MCF 10A (cell line): ENCODE measurements at regions of chr5 and their contacts with region 1.

Region 1: DNA sequence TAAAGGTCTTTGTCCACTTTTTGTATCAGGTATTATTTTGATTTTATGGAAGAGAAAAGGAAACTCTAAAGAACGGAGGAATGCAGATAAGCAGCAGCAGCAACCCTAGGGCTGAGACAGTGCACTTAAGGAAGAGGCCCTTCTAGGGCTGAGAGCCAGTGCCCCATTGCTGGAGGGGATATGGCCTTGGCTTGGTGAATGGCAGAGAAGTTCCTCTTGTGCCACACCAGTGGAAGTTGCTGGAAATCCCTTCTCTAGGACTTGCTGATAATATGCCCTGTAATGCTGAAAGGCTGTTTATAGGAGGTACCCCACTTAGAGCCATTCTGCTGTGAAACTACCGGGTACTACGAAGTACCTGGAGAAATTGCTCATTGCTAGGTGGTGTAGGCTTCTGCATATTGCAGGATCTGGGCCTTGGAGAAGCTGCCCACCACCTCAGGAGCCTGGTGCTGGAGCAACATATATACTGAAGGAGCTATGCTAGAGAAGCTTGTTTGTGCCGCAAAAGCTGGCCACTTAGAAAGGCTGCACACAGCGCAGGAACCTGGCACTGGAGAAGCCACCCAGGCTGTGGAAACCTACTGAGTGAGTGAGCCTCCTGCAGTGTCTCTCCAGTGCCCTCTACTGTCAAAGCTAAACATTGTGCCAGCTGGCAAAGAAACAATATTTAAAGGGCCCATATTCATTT is 9.6 kb upstream of the UBTD2 start:
- DNase-seq: peak; percentile 87
- H3K4me3 Mint-ChIP-seq: no peak overlapping the region
- H3K27ac Mint-ChIP-seq: no peak overlapping the region
- H3K4me1 Mint-ChIP-seq: peaks cover 9% of the 10 kb centered on the region
- H3K27me3 Mint-ChIP-seq: peaks cover 12% of the 10 kb centered on the region
- CTCF ChIP-seq: peak; percentile 97

Region 2: DNA sequence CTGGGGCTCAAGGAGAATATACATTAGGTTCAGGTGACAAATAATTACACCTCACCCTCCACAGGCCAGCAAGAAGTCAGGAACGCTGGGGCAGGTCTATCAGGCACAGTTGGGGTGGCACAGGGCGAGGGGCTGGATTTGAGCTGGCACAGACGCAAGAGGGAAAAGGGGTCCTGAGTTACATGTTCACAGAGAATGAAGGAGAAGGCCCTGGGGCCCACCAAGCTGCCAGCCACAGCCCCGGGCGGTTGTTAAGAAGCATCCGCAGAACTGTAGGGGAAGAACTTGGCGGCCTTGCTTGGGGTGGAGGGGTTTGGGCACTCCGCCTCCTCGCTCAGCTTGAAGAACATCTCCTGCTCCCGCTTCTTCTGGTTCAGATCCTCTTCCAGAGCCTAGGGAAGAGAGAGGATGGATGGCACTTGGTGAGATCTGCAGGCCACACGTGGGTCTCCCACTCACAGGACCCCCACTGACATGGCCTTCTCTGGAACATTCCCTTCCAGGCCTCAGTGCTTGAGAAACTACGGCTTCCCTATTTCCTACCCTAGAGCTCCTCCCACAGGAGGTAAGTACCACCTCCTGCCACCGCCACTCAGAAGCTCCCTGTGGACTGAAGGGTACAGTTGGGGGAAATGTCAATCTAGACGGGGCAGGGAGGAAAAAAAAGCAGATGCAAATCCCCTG is 248.4 kb before region 1 on chr5:
- CTCF ChIA-PET with region 1: interaction called, 5 read pairs
- POLR2A ChIA-PET with region 1: no interaction called
- intact Hi-C with region 1: loop called (anchors 5 kb)
- DNase-seq: no peak
- H3K4me3 Mint-ChIP-seq: no peak overlapping the region
- H3K27ac Mint-ChIP-seq: peak overlapping the region; percentile 52
- H3K4me1 Mint-ChIP-seq: peaks cover 6% of the 10 kb centered on the region
- H3K27me3 Mint-ChIP-seq: no peaks in the 10 kb centered on the region
- CTCF ChIP-seq: no peak

Region 3: GRCh38 chr5:172106511-172107356 is 186.5 kb before region 1 on chr5:
- CTCF ChIA-PET with region 1: interaction called, 15 read pairs
- POLR2A ChIA-PET with region 1: interaction called, 4 read pairs
- intact Hi-C with region 1: loop called (anchors 1 kb)
- DNase-seq: peak; percentile 47
- H3K4me3 Mint-ChIP-seq: peak overlapping the region; percentile 46
- H3K27ac Mint-ChIP-seq: no peak overlapping the region
- H3K4me1 Mint-ChIP-seq: peaks cover 65% of the 10 kb centered on the region
- H3K27me3 Mint-ChIP-seq: no peaks in the 10 kb centered on the region
- CTCF ChIP-seq: peak; percentile 99

Region 4: DNA sequence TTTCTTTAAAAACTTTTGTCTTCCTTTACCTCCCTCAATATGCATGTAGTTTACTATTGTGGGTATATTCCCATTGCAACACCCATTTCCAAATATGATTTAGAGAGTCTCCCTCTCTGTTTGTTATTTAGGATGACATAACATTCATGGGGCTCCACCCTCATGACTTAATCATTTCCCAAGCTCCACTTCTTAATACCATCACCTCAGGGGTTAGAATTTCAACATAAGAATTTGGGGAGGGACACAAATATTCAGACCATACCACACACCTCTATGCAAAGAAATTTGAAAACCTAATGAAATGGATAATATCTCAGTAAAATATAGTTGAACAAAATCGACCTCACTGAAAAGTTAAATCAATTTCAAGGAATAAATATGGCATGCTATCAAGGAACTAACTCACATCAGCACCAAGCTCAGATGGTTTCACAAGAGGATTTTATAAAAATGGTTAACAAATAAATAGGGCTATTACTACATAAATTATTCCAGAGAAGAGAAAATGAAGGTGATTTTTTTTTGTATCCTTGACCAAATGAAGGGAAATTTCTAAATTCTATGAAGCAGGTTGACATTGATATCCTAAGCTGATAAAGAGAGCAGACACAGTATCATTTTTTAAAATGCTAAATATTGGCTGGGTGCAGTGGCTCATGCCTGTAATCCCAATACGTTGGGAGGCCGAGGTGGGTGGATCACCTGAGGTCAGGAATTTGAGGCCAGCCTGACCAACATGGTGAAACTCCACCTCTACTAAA is 10.6 kb after region 1 on chr5:
- CTCF ChIA-PET with region 1: interaction called, 33 read pairs
- POLR2A ChIA-PET with region 1: interaction called, 11 read pairs
- intact Hi-C with region 1: no loop called
- DNase-seq: peak; percentile 85
- H3K4me3 Mint-ChIP-seq: no peak overlapping the region
- H3K27ac Mint-ChIP-seq: no peak overlapping the region
- H3K4me1 Mint-ChIP-seq: peaks cover 11% of the 10 kb centered on the region
- H3K27me3 Mint-ChIP-seq: no peaks in the 10 kb centered on the region
- CTCF ChIP-seq: no peak